PC-3 (cell line): ENCODE measurements at regions of chr7 and their contacts with region 1.

Region 1: DNA sequence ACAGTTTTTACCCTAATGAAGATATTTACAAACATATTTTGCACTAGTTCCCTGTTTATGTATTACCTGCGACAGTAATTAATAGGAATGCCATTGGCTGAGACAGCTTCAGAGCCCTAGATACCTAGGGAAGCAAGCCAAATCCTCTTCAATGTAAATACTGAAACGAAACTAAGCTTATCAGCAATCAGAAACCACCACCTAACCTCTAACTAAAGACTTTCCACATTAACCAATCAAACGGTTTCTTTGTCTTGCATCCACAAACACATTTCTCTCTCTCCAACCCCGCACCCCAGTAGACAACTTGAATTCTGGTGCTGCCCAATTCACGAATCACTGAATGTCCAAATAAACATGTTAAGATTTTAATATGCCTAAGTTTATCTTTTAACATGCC is 474.4 kb upstream of the C7orf33 start:
- DNase-seq: no peak
- ATAC-seq: no peak
- H3K4me3 ChIP-seq: no peak overlapping the region
- H3K27ac ChIP-seq: no peak overlapping the region
- H3K4me1 ChIP-seq: no peaks in the 10 kb centered on the region
- H3K27me3 ChIP-seq: peaks cover 7% of the 10 kb centered on the region; the same call in 1 of the 2 replicates
- CTCF ChIP-seq: no peak

Region 2: GRCh38 chr7:147235645-147236382 is 880.4 kb before region 1 on chr7:
- CTCF ChIA-PET with region 1: interaction called, 11 read pairs
- POLR2A ChIA-PET with region 1: no interaction called
- intact Hi-C with region 1: no loop called
- DNase-seq: no peak
- ATAC-seq: no peak
- H3K4me3 ChIP-seq: no peak overlapping the region
- H3K27ac ChIP-seq: no peak overlapping the region
- H3K4me1 ChIP-seq: no peaks in the 10 kb centered on the region
- H3K27me3 ChIP-seq: no peaks in the 10 kb centered on the region
- CTCF ChIP-seq: no peak

Region 3: GRCh38 chr7:148153616-148154284 is 37.6 kb after region 1 on chr7:
- CTCF ChIA-PET with region 1: no interaction called
- POLR2A ChIA-PET with region 1: no interaction called
- intact Hi-C with region 1: no loop called
- DNase-seq: no peak
- ATAC-seq: no peak; the same call in 1 of the 2 replicates
- H3K4me3 ChIP-seq: no peak overlapping the region
- H3K27ac ChIP-seq: no peak overlapping the region
- H3K4me1 ChIP-seq: no peaks in the 10 kb centered on the region
- H3K27me3 ChIP-seq: no peaks in the 10 kb centered on the region
- CTCF ChIP-seq: no peak